ENCODE measurements at regions of chr1 and their contacts with region 1.

Region 1: DNA sequence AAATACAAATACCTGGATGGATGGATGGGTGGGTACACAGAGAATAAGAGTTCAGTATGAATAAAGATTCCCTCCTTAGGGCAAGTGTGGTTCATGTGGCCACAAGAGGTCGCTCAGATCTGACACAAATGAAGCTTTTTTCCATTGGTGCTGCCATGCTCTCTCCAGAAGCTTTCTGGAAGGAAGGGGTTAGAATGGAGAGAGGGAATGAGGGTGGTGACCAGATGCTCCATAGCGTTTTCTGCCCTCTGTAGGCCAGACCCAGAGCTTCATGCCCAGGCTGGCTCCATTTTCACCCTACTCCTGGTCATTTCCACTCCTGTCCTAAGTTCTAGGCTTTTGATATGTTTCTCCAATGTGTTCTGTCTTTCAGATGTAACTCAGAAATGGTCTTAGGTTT is 3.3 kb upstream of the FCRL6 start:
- DNase-seq: peak; percentile 70
- ATAC-seq: peak; percentile 63
- H3K4me3 Mint-ChIP-seq: no peak overlapping the region
- H3K27ac Mint-ChIP-seq: no peak overlapping the region
- H3K4me1 Mint-ChIP-seq: peaks cover 30% of the 10 kb centered on the region
- H3K27me3 Mint-ChIP-seq: peaks cover 42% of the 10 kb centered on the region

Region 2: DNA sequence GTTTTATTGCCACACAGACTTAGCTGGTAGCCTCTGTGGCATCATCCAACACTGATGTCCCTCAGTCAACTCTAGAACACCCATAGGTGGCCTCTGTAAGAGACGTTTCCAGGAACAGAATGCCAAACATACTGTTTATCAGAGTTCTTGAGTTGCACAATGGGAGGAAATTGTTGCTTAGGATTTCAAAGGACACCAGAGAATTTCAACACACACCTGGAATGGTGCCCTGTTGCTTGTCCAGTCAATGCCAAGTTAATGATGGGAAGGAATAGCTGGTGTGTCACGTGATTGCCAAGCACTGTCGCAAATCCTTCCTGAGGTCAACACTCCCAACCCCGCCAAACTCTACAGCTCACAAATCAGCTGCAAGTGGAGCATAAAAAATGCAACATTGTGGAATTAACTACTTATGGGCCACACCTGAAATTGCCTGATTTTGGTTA is 46.7 kb before region 1 on chr1:
- CTCF ChIA-PET with region 1: no interaction called
- DNase-seq: no peak
- ATAC-seq: no peak
- H3K4me3 Mint-ChIP-seq: no peak overlapping the region
- H3K27ac Mint-ChIP-seq: no peak overlapping the region
- H3K4me1 Mint-ChIP-seq: no peaks in the 10 kb centered on the region
- H3K27me3 Mint-ChIP-seq: peaks cover 4% of the 10 kb centered on the region

Region 3: DNA sequence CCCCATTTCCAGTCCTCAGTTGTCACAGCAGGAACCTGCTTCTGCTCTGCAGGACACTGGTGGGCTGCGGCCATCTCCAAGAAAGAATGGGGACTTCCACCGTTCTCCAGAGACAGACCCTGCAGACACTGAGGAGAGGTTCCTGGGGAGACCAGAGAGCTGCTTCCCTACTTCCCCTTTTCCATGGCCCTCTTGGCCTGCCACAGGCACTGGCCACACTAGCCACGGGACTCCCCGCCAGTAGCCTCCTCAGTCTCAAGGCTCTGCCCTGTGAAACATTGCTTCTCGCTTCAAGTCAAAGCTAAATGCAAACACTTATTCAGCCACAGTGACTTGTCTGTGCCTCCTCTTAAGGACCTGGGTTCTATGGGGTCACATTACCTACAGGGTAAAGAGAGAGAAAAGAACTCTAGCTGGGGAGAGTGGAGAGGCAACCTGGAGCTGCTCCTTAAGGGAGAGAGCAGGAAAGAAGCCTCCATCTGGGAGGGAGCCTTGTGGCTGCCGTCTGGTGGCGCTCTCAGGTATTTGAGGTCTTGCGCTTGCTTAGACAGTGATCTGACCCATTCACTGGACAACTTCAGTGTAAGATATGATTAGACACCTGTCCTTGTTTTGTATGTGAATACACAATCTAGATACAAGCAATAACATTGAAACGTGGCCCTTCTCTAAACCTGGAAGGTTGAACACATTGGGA is 22.4 kb after region 1 on chr1:
- CTCF ChIA-PET with region 1: interaction called, 71 read pairs
- DNase-seq: no peak
- ATAC-seq: no peak
- H3K4me3 Mint-ChIP-seq: no peak overlapping the region
- H3K27ac Mint-ChIP-seq: no peak overlapping the region
- H3K4me1 Mint-ChIP-seq: peaks cover 24% of the 10 kb centered on the region
- H3K27me3 Mint-ChIP-seq: peaks cover 47% of the 10 kb centered on the region

Region 4: DNA sequence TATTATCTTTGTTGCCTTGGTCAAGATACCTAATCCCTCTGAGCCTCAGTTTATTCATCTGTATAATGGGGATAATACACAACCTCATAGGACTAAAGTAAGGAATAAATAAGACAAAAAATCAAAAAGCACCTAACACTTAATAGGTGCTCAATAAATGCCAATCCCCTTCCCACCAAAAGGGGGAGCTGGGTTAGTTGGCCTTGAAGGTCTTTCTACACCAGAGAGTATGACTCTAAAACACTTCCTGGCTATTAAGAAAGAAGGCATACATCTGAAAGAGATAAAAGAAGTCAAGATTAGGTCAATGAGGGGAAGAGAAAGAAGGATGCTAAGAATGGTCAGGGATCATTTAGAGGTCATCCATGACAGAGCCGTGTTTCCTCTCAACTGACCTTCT is 52.5 kb after region 1 on chr1:
- CTCF ChIA-PET with region 1: interaction called, 12 read pairs
- DNase-seq: no peak
- ATAC-seq: no peak
- H3K4me3 Mint-ChIP-seq: no peak overlapping the region
- H3K27ac Mint-ChIP-seq: no peak overlapping the region
- H3K4me1 Mint-ChIP-seq: peaks cover 12% of the 10 kb centered on the region
- H3K27me3 Mint-ChIP-seq: peaks cover 13% of the 10 kb centered on the region

Region 5: GRCh38 chr1:159881930-159882839 is 83.3 kb after region 1 on chr1:
- CTCF ChIA-PET with region 1: interaction called, 430 read pairs
- DNase-seq: no peak
- ATAC-seq: no peak
- H3K4me3 Mint-ChIP-seq: no peak overlapping the region
- H3K27ac Mint-ChIP-seq: no peak overlapping the region
- H3K4me1 Mint-ChIP-seq: no peaks in the 10 kb centered on the region
- H3K27me3 Mint-ChIP-seq: no peaks in the 10 kb centered on the region

Region 6: DNA sequence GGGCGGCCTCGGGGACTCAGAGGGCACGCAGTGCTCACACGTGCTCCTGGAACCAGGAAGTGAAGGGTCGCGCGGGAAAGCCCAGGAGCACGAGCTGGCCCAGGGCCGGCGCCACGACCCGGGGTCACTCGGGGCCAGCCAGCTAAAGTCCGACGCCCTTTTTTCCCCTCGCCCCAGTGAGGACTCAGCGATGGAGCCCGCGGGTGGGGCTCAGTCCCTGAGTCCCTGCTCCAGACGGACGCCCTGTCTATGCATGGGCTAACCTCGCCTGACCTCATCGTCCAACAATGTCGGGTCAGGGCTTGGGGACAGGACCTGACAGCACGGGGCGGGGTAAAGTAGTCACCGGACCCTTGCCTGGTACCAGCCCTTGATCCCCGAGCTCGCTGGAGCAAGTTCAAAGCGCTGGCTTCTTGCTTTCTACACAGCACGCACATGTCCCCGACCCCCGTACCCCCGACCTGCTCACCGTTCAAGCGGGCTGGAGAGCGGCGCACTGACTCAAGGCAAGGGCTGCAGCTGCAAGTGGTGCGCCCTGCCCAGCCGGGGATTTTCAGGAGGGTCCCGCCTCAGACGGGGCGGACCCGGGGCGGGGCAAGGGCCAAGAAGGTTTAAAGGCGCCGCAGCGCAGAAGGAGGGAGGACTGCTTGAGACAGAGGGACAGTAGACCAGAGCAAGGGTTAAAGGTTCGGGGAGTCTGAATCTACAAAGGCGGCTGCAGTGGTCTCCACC is 126.3 kb after region 1 on chr1 and contains the start of gene TAGLN2:
- CTCF ChIA-PET with region 1: interaction called, 13 read pairs
- DNase-seq: peak; percentile 93
- ATAC-seq: peak; percentile 70
- H3K4me3 Mint-ChIP-seq: peak within 1 kb of the TSS; percentile 95
- H3K27ac Mint-ChIP-seq: peak within 1 kb of the TSS; percentile 98
- H3K4me1 Mint-ChIP-seq: peaks cover 41% of the 10 kb centered on the region
- H3K27me3 Mint-ChIP-seq: no peaks in the 10 kb centered on the region
- total RNA-seq, gene TAGLN2: 479 to 513 TPM